ENCODE measurements at regions of chr6 and their contacts with region 1.

Region 1: DNA sequence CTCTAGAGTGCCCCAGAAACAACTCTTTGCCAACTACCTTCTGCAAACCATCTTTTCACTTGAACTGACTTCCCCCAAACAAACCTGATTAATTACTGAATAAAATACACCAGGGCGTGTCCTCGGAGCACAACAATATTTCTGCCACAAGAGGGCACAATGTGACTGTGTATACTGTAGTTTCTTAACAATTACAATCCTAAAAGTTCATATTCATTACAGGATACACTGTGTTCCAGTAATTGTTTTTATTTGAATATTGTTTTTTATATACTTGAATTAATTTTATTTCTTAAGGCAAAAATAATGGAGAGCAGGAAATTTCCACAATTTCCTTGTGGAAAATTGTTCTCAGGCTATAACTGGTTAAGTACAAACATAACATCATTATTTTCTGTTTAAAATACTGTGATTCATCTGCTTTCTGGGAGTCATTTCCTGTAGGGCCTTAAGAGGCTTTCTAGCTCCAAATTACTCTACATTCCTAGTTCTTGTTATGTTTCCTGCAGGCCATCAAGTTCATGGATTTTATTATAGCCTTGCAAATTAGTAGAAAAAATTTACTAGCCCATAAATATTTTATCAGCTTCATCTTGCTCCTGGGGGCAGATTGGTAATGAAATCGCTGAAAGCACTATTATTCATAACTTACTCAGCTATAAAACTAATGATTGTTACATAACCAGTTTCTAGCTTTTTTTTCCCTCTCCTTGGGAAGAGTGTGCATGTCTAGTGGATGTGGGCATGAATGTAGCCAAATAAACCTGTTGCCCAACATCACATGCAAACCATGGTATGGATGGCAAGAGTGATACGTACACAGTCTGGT is 51.9 kb upstream of the SLC22A16 start:
- DNase-seq: peak in 7 of 9 experiments; percentile 22 to 75 (median 53)
- ATAC-seq: peak; percentile 56
- H3K4me3 ChIP-seq: no peak overlapping the region
- H3K4me3 Mint-ChIP-seq: no peak overlapping the region
- H3K27ac ChIP-seq: no peak overlapping the region
- H3K27ac Mint-ChIP-seq: no peak overlapping the region
- H3K4me1 ChIP-seq: no peaks in the 10 kb centered on the region
- H3K4me1 Mint-ChIP-seq: no peaks in the 10 kb centered on the region
- H3K27me3 ChIP-seq: no peaks in the 10 kb centered on the region
- H3K27me3 Mint-ChIP-seq: peaks cover 3% of the 10 kb centered on the region
- CTCF ChIP-seq: peak; percentile 87

Region 2: DNA sequence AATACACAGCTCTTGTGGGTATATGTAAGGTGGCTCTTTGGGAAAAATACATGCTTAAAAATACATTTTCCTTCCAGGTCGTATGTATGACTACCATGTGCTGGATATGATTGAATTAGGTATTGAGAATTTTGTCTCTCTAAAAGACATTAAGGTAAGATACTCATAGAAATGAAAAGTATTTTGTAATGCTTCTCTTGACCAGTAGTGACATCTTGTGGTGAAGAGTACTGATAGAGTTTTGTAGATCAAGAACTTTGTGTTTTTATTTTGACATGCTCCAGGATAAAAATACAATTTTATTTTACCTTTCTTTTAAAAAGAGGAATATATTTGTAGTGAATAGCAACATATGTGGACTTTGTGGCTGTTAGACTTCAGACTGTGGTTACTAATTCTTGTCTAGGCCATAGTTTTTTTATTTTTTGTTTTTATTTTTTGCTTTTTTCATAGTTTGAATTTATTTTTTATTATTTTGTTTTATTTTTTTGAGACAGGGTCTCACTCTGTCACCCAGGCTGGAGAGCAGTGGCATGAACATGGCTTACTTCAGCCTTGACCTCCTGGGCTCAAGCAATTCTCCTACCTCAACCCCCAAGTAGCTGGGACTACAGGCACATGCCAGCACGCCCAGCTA is 471.4 kb after region 1 on chr6:
- CTCF ChIA-PET with region 1: interaction called, 9 read pairs
- POLR2A ChIA-PET with region 1: no interaction called
- intact Hi-C with region 1: loop called (anchors 1 kb)
- DNase-seq: peak in 2 of 9 experiments; percentile 47 to 56
- ATAC-seq: peak; percentile 23
- H3K4me3 ChIP-seq: no peak overlapping the region
- H3K4me3 Mint-ChIP-seq: no peak overlapping the region
- H3K27ac ChIP-seq: no peak overlapping the region
- H3K27ac Mint-ChIP-seq: no peak overlapping the region
- H3K4me1 ChIP-seq: no peaks in the 10 kb centered on the region
- H3K4me1 Mint-ChIP-seq: no peaks in the 10 kb centered on the region
- H3K27me3 ChIP-seq: no peaks in the 10 kb centered on the region
- H3K27me3 Mint-ChIP-seq: no peaks in the 10 kb centered on the region
- CTCF ChIP-seq: peak; percentile 36

Measured in CD8-positive, alpha-beta T cell (primary cell).